HEK293T (cell line): ENCODE measurements at regions of chr7 and their contacts with region 1.

Region 1: DNA sequence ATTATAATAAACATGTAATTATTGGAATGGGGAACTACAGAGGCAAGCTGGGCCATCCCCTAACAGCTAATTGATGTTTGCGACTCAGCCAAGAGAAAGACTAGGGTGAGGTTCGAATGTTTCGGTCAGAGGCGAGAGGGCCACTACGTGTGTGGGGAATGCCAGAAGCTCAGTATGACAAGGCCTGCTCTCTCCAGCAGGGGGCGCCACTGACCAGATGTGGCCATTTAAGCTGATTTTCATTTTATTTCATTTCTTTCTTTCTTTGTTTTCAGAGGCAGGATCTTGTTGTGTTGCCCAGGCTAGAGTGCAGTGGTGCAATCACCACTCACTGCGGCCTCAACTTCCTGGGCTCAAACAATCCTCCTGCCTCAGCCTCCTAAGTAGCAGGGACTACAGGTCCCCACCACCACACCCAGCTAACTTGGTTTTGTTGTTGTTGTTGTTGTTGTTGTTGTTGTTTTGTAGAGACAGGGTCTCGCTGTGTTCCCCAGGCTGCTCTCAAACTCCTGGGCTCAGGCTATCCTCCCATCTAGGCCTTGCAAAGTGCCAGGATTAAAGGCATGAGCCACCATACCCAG is 38.1 kb downstream of the TMEM130 start:
- DNase-seq: peak; percentile 62

Region 2: DNA sequence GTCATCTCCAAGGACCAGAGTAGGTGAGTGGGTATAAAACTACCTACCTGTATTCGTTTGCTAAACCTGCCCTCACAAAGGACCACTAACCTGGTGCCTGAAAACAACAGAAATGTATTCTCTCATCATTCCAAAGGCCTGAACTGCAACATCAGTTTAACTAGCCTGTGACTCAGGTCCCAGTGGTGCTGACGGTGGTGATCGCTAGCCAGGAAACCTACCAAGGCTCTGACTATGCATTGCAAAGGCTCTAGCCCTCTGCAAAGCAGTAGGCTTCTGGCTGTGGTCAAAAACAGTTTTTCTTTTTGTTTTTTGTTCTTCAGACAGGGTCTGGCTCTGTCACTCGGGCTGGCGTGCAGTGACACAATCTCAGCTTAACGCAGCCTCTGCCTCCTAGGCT is 107.1 kb before region 1 on chr7:
- CTCF ChIA-PET with region 1: no interaction called
- POLR2A ChIA-PET with region 1: no interaction called
- DNase-seq: no peak

Region 3: GRCh38 chr7:98821348-98821747 is 10.4 kb before region 1 on chr7:
- CTCF ChIA-PET with region 1: interaction called, 20 read pairs
- POLR2A ChIA-PET with region 1: no interaction called
- DNase-seq: no peak